ENCODE measurements at regions of chr5 and their contacts with region 1.

Region 1: GRCh38 chr5:41856644-41857491 is 13.4 kb downstream of the OXCT1 start:
- DNase-seq: no peak
- H3K4me3 ChIP-seq: no peak overlapping the region
- H3K27ac ChIP-seq: no peak overlapping the region
- H3K4me1 ChIP-seq: no peaks in the 10 kb centered on the region
- H3K27me3 ChIP-seq: no peaks in the 10 kb centered on the region
- CTCF ChIP-seq: peak; percentile 66 to 87 (median 73)
- POLR2A ChIP-seq: no peak

Region 2: DNA sequence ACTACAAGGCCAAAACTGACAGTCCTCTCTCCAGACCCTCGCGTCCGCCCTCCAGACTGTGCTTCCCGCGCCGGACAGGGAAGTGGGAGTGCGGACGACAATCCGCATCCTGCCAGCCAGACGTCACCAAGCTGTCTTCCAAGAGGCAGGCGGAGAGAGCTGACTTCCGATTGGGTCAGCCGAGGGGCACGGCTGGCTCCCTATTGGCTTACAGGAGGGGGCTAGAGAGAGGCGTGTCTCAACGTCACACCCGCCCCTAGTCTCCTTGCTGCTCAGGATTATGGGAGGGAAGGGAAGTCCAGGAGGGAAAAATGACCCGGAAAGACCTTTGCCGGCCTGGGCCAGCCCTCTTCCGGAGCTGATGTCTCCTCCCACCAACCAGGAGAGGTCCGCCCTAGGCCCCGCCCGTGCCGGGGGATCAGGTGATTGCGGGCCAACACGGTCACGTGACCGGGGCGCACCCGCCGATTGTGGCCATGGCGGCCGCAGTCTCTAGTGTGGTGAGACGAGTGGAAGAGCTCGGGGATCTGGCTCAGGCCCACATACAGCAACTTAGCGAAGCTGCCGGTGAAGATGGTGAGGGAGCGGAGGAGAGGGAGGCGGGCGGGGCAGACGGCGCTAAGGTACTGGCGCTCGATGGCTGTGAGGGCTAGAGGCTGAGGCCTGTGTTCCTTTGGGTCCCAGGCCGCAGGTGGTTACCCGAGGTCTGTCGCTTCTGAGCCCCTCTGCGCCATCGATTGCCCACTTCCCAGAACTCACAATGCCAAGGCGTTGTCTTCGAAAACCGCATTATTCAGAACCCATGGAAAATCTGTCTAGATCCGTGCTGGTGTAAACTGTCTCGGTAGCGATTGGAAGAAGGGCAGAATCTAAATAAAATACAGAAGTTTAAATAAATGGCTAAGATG is 47.3 kb after region 1 on chr5 and contains the start of gene RIMOC1:
- intact Hi-C with region 1: loop called (anchors 10 kb)
- DNase-seq: peak; percentile 99 to 100
- H3K4me3 ChIP-seq: peak within 1 kb of the TSS; percentile 75 to 85
- H3K27ac ChIP-seq: peak within 1 kb of the TSS; percentile 95
- H3K4me1 ChIP-seq: peaks cover 30% of the 10 kb centered on the region
- H3K27me3 ChIP-seq: no peaks in the 10 kb centered on the region
- CTCF ChIP-seq: no peak
- POLR2A ChIP-seq: peak in 1 of 2 donors; percentile 79
- total RNA-seq, gene RIMOC1: 10.3 TPM

Region 3: DNA sequence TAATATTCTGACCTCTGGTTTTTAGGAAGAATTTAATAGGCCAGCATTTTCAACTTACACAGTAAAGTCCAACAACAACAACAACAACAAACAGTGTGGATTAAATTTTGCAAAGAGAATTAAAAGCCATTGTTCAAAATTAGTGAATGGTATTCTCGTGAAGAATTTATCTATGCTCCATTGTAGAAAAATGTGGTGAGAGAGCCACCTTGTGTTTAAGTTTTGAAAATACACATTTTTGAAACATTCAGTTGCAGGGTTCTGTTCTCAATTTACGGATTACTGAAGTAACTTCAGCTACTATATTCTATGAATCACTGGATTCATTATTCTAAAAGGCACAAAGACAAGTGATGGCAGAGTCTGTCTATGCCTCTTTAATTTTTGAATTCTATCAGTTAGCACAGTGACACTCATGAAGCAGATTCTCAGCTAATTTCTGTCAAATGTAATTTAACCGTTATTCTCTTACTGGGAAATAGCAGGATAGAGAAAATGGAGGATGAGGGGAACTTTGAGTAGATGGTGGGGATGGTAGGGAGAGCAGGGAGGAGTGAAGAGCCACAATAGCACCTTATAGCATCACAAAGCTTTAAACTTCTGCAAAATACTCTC is 910.7 kb after region 1 on chr5:
- intact Hi-C with region 1: loop called (anchors 5 kb)
- DNase-seq: no peak
- H3K4me3 ChIP-seq: no peak overlapping the region
- H3K27ac ChIP-seq: no peak overlapping the region
- H3K4me1 ChIP-seq: no peaks in the 10 kb centered on the region
- H3K27me3 ChIP-seq: no peaks in the 10 kb centered on the region
- CTCF ChIP-seq: peak in 2 of 3 experiments; percentile 63 to 64
- POLR2A ChIP-seq: no peak